Naive thymus-derived CD4-positive, alpha-beta T cell (primary cell): ENCODE measurements at regions of chr7 and their contacts with region 1.

Region 1: GRCh38 chr7:39732837-39733804 is 109.7 kb downstream of the RALA start:
- DNase-seq: peak; percentile 80 to 96 (median 91)
- ATAC-seq: peak; percentile 95
- H3K4me3 ChIP-seq: peak overlapping the region; percentile 83
- H3K4me3 Mint-ChIP-seq: peak overlapping the region; percentile 78 to 95 (median 92)
- H3K27ac ChIP-seq: peak overlapping the region; percentile 82
- H3K27ac Mint-ChIP-seq: peak overlapping the region; percentile 93 to 98 (median 96)
- H3K4me1 ChIP-seq: peaks cover 11 to 27% of the 10 kb centered on the region in 2 donors
- H3K4me1 Mint-ChIP-seq: peaks cover 13 to 46% (median 40%) of the 10 kb centered on the region in 7 donors
- H3K27me3 ChIP-seq: no peaks in the 10 kb centered on the region
- H3K27me3 Mint-ChIP-seq: peaks cover 0 to 9% (median 0%) of the 10 kb centered on the region in 5 donors

Region 2: DNA sequence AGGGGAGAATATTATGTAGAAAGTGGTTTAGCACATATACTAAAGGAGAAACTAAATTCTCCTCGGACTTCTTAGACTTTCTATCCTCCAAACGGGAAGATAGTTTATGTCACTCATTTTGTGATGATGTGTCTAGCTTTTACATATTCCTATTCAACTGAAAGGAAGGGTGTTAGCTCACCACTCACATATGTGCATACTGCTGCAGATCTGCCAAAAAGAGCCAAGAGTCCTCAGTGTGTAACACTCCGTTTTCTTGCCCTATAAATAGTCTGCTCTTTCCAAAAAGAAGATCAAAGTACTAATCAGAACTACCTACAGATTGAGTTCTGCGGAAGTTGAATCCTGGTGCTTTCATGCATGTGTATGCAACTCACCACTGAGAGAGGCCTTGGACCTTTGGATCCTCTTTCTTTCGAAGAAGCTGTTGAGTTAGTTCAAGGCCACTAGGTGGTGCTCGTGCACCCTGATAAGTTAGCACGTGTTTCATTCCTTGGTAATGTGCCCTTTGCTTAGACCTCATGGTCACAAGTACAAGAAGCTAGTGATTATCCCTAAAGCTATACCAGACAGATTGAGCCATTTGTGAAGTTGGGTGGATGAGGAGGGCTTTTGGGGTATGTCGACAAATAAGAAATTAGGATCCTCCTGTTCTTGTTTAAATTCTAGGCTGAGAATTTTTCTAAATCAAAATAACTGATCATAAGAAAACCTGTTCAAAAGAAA is 152.8 kb before region 1 on chr7:
- CTCF ChIA-PET with region 1: interaction called, 336 read pairs
- POLR2A ChIA-PET with region 1: interaction called, 6 read pairs
- intact Hi-C with region 1: no loop called
- DNase-seq: peak; percentile 38 to 79 (median 73)
- ATAC-seq: peak; percentile 98
- H3K4me3 ChIP-seq: no peak overlapping the region
- H3K4me3 Mint-ChIP-seq: no peak overlapping the region
- H3K27ac ChIP-seq: no peak overlapping the region
- H3K27ac Mint-ChIP-seq: peak overlapping the region in 5 of 9 donors; percentile 23 to 61 (median 44)
- H3K4me1 ChIP-seq: no peaks in the 10 kb centered on the region
- H3K4me1 Mint-ChIP-seq: peaks cover 2 to 12% (median 10%) of the 10 kb centered on the region in 7 donors
- H3K27me3 ChIP-seq: no peaks in the 10 kb centered on the region
- H3K27me3 Mint-ChIP-seq: no peaks in the 10 kb centered on the region

Region 3: DNA sequence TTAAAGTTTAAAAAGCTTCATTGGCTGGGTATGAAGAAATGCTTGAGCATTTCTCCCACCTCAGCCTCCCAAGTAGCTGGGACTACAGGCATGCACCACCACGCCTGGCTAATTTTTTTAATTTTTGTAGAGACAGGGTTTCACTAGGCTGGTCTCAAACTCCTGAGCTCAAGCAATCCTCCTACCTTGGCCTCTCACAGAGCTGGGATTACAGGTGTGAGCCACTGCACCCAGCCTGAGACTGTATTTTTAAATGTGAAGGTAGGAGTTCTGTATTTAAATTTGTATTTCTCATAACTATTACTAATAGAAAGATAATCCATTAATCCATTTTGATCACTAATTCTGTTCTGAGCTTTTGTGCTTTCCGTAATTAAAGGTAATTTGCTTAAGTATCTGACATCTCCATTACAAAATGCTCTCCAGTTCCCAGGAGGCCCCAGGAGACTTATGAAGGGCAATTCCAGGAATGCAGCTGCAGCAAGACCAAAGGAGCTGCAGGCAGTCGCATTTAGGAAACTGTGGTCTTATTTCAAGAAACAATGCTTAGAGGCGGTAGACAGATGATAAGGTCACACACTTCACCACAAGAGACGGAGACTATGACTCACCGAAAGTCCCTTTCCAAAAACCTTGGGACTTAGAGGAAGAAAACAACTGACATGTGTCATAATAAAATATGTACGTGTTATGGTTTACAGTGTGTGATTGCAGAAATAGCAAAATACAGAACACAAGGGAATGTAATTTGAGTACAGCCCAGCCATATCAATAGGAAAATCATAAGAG is 143.6 kb before region 1 on chr7:
- CTCF ChIA-PET with region 1: interaction called, 3 read pairs
- POLR2A ChIA-PET with region 1: interaction called, 6 read pairs
- intact Hi-C with region 1: loop called (anchors 1 kb)
- DNase-seq: peak in 8 of 9 donors; percentile 37 to 85 (median 60)
- ATAC-seq: peak; percentile 94
- H3K4me3 ChIP-seq: no peak overlapping the region
- H3K4me3 Mint-ChIP-seq: peak overlapping the region in 6 of 10 donors; percentile 19 to 78 (median 52)
- H3K27ac ChIP-seq: no peak overlapping the region
- H3K27ac Mint-ChIP-seq: peak overlapping the region in 8 of 9 donors; percentile 55 to 90 (median 77)
- H3K4me1 ChIP-seq: peaks cover 5 to 15% of the 10 kb centered on the region in 2 donors
- H3K4me1 Mint-ChIP-seq: peaks cover 10 to 54% (median 26%) of the 10 kb centered on the region in 7 donors
- H3K27me3 ChIP-seq: no peaks in the 10 kb centered on the region
- H3K27me3 Mint-ChIP-seq: no peaks in the 10 kb centered on the region

Region 4: DNA sequence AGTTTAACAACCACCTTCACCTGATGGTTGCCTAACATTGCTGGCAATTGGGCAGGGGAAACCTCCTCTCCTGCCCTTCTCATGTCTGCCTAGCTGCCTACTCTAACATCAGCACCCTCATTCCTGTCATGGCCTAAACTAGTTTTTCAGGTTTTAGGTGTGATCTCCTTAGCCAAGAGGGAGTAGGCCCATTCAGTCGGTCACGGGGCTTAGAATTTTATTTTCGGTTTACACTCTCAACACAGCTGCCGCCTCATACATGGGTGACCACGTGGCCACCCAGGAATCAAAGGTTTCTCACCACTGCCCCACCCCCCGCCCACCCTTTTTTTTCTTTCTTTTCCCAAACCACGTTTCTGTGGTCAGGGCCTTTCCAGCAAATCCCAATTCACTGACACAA is 12.5 kb before region 1 on chr7:
- CTCF ChIA-PET with region 1: interaction called, 3 read pairs
- POLR2A ChIA-PET with region 1: interaction called, 3 read pairs
- intact Hi-C with region 1: loop called in 1 of 2 experiments (anchors 1 kb)
- DNase-seq: no peak
- ATAC-seq: no peak
- H3K4me3 ChIP-seq: no peak overlapping the region
- H3K4me3 Mint-ChIP-seq: no peak overlapping the region
- H3K27ac ChIP-seq: no peak overlapping the region
- H3K27ac Mint-ChIP-seq: no peak overlapping the region
- H3K4me1 ChIP-seq: no peaks in the 10 kb centered on the region
- H3K4me1 Mint-ChIP-seq: no peaks in the 10 kb centered on the region
- H3K27me3 ChIP-seq: no peaks in the 10 kb centered on the region
- H3K27me3 Mint-ChIP-seq: peaks cover 0 to 7% (median 0%) of the 10 kb centered on the region in 5 donors

Region 5: DNA sequence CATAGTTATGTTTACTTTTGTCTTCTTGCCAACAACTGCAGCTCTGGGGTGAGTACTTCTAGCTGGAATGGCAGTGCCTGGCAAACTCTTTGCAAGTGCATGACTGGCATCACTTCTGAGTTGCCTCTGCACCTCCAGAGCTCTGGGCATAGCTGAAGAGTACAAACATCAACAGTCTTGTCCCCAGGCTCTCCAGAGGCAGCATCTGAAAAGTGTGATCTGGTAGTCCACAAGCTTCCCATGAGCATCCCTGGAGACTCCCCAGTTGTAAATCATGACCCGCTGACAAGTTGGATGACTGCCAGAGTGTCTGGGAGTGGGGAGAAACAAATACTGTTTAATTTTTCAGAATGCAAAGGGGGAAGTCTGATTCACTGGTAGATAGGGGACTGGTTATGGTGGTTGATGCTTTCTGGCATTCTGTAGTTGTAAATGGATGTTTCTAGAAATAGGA is 78.1 kb after region 1 on chr7:
- CTCF ChIA-PET with region 1: no interaction called
- POLR2A ChIA-PET with region 1: no interaction called
- intact Hi-C with region 1: no loop called
- DNase-seq: no peak
- ATAC-seq: no peak
- H3K4me3 ChIP-seq: no peak overlapping the region
- H3K4me3 Mint-ChIP-seq: no peak overlapping the region
- H3K27ac ChIP-seq: no peak overlapping the region
- H3K27ac Mint-ChIP-seq: no peak overlapping the region
- H3K4me1 ChIP-seq: no peaks in the 10 kb centered on the region
- H3K4me1 Mint-ChIP-seq: no peaks in the 10 kb centered on the region
- H3K27me3 ChIP-seq: no peaks in the 10 kb centered on the region
- H3K27me3 Mint-ChIP-seq: peaks cover 13 to 40% (median 19%) of the 10 kb centered on the region in 5 donors

Region 6: GRCh38 chr7:39979406-39980073 is 246.4 kb after region 1 on chr7:
- CTCF ChIA-PET with region 1: no interaction called
- POLR2A ChIA-PET with region 1: no interaction called
- intact Hi-C with region 1: no loop called
- DNase-seq: peak in 7 of 9 donors; percentile 18 to 54 (median 39)
- ATAC-seq: peak; percentile 81
- H3K4me3 ChIP-seq: no peak overlapping the region
- H3K4me3 Mint-ChIP-seq: no peak overlapping the region
- H3K27ac ChIP-seq: peak overlapping the region; percentile 35
- H3K27ac Mint-ChIP-seq: no peak overlapping the region
- H3K4me1 ChIP-seq: peaks cover 32 to 40% of the 10 kb centered on the region in 2 donors
- H3K4me1 Mint-ChIP-seq: peaks cover 5 to 21% (median 20%) of the 10 kb centered on the region in 7 donors
- H3K27me3 ChIP-seq: no peaks in the 10 kb centered on the region
- H3K27me3 Mint-ChIP-seq: no peaks in the 10 kb centered on the region

Region 7: DNA sequence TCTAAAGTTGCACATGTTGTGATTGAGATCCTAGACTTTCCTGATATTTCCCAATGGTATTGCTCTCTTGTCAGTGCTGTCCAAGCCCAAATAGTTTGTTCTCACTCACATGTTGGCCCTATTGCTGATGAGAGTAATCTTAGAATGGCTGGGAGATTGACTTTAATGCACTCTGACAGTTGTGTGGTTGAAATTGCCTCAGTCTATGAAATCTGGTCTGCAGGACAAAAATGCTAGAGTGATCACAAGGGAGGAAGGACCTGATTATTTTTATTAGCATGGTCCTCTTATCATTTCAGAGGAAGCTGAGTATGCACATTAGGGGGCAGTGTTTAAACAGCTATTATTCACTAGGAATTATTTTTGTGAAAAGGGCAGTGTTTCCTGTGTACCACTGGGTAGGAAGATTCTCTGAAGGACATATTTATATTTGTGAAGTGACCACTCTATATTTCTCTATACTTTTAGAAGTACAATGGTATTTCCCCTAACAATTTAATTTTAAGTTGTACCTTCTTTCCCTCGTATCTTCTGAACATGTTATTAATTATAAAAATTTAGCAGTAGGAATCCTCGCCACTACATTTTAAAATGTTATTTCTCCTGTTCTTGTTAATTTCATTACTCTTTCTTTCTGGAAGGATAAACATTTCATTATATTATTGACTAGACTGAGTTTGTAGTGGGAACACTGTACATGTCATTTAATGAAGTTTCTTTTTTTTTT is 466.1 kb after region 1 on chr7:
- CTCF ChIA-PET with region 1: no interaction called
- POLR2A ChIA-PET with region 1: no interaction called
- intact Hi-C with region 1: no loop called
- DNase-seq: no peak
- ATAC-seq: no peak
- H3K4me3 ChIP-seq: no peak overlapping the region
- H3K4me3 Mint-ChIP-seq: no peak overlapping the region
- H3K27ac ChIP-seq: no peak overlapping the region
- H3K27ac Mint-ChIP-seq: no peak overlapping the region
- H3K4me1 ChIP-seq: no peaks in the 10 kb centered on the region
- H3K4me1 Mint-ChIP-seq: no peaks in the 10 kb centered on the region
- H3K27me3 ChIP-seq: no peaks in the 10 kb centered on the region
- H3K27me3 Mint-ChIP-seq: peaks cover 0 to 4% (median 0%) of the 10 kb centered on the region in 5 donors

Region 8: GRCh38 chr7:40455485-40455884 is 722.4 kb after region 1 on chr7:
- CTCF ChIA-PET with region 1: no interaction called
- POLR2A ChIA-PET with region 1: no interaction called
- intact Hi-C with region 1: no loop called
- DNase-seq: no peak
- ATAC-seq: no peak
- H3K4me3 ChIP-seq: no peak overlapping the region
- H3K4me3 Mint-ChIP-seq: no peak overlapping the region
- H3K27ac ChIP-seq: no peak overlapping the region
- H3K27ac Mint-ChIP-seq: no peak overlapping the region
- H3K4me1 ChIP-seq: no peaks in the 10 kb centered on the region
- H3K4me1 Mint-ChIP-seq: peaks cover 0 to 1% (median 0%) of the 10 kb centered on the region in 7 donors
- H3K27me3 ChIP-seq: no peaks in the 10 kb centered on the region
- H3K27me3 Mint-ChIP-seq: no peaks in the 10 kb centered on the region